ENCODE measurements at regions of chr9 and their contacts with region 1.

Region 1: DNA sequence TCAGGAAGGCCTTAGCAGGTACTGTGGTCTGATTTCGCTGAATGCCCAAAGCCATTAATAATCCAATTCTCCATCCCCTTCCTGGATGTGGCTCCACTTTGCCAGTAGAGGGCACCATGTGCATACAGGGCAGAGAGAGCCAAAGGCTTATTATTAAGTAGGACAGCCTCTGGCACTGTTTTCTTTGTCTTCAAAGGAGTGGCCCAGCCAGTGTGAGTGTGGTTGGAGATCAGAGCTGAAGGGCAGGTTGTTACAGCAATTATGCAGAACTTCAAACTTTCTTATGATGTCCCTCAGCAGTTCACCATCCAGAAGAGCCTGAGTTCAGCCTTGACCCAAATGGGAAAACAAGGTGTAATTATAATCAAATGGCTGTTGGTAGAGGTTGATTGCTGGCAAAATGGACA is 38.6 kb upstream of the CEMIP2 start:
- DNase-seq: peak; percentile 82
- ATAC-seq: peak; percentile 99
- H3K4me3 Mint-ChIP-seq: no peak overlapping the region
- H3K27ac Mint-ChIP-seq: peak overlapping the region; percentile 47
- H3K4me1 Mint-ChIP-seq: peaks cover 4% of the 10 kb centered on the region
- H3K27me3 Mint-ChIP-seq: no peaks in the 10 kb centered on the region

Region 2: DNA sequence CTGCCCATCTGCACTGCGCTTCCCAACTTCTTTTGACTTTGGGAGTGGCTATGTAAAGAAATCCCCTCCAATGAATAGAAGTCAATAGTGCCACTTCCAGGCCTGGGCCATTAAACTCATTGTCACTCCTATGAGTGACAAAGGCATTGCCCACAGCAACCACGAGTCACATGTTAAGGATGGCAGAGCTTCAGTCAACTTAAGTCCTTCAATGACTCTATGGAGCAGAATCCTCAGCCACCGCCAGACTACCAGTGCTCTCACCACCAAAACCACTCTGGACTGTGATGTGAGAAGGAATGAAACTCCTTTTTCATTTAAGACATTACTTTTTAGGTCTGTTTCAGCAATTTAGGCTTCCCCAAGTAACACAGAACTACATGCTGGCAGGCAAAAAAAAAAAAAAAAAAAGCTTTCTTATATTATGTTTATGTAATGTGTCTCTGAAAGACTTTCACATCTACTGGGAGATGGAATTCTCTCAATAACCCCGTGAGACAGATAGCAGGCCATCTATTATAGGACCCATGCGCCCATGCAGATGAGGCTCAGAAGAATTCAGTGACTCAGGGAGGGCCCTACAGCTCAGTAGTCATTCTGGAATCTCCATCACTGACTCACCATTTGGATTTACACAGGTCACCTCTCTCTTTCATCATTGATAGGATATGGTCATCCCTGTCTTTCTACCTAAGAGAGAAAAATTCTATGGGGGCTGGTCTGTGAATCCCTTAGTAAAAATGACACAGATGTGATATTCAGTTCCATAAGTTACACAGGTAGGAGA is 219.1 kb before region 1 on chr9:
- CTCF ChIA-PET with region 1: no interaction called
- DNase-seq: peak; percentile 41
- ATAC-seq: no peak
- H3K4me3 Mint-ChIP-seq: no peak overlapping the region
- H3K27ac Mint-ChIP-seq: no peak overlapping the region
- H3K4me1 Mint-ChIP-seq: no peaks in the 10 kb centered on the region
- H3K27me3 Mint-ChIP-seq: peaks cover 4% of the 10 kb centered on the region

Region 3: GRCh38 chr9:71783120-71783530 is 23.8 kb before region 1 on chr9:
- CTCF ChIA-PET with region 1: interaction called, 44 read pairs
- DNase-seq: peak; percentile 94
- ATAC-seq: peak; percentile 93
- H3K4me3 Mint-ChIP-seq: peak overlapping the region; percentile 60
- H3K27ac Mint-ChIP-seq: peak overlapping the region; percentile 99
- H3K4me1 Mint-ChIP-seq: peaks cover 47% of the 10 kb centered on the region
- H3K27me3 Mint-ChIP-seq: no peaks in the 10 kb centered on the region

Region 4: DNA sequence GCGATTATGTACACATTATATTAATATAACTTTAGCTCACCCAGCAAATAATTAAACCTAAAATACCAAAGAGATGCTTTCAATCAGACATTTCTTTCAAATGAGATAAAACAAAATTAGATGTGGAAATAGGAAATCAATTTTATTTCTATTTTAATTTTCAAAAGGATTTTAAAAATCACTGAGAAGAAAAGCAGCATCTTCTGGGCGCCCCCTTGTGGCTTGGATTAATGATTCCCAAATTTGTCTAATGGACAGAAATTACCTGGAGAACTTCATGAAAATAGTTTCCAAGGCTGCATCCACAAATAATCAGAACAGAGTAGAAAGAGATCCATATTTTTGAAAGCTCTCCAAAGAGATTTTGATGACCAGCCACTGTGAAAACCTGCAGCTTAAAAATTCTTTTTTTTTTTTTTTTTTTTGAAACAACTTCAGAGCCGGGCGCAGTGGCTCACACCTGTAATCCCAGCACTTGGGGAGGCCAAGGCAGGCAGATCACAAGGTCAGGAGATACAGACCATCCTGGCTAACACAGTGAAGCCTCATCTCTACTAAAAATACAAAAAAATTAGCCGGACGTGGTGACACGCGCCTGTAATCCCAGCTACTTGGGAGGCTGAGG is 12.3 kb after region 1 on chr9:
- CTCF ChIA-PET with region 1: interaction called, 45 read pairs
- DNase-seq: no peak
- ATAC-seq: no peak
- H3K4me3 Mint-ChIP-seq: no peak overlapping the region
- H3K27ac Mint-ChIP-seq: no peak overlapping the region
- H3K4me1 Mint-ChIP-seq: peaks cover 9% of the 10 kb centered on the region
- H3K27me3 Mint-ChIP-seq: no peaks in the 10 kb centered on the region

Region 5: DNA sequence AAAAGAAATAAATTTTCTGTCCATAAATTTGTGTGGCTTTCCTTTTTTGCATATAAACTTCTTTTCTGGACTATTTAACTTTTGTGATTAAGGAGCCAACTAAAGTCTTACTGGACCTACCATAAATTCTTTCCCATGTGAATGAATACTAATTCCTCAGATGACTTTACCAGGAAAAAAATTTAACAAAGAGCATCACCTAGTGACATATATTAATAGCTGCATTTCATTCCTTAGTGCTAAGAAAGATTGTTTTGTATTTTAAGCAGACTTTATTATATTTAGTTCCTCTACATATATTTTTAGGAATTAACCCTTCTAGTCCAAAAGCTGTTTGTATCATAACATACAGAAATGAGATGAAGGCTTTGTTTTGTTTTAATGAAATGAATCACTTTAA is 168.9 kb after region 1 on chr9:
- CTCF ChIA-PET with region 1: interaction called, 12 read pairs
- DNase-seq: no peak
- ATAC-seq: no peak
- H3K4me3 Mint-ChIP-seq: no peak overlapping the region
- H3K27ac Mint-ChIP-seq: no peak overlapping the region
- H3K4me1 Mint-ChIP-seq: no peaks in the 10 kb centered on the region
- H3K27me3 Mint-ChIP-seq: no peaks in the 10 kb centered on the region

Region 6: GRCh38 chr9:72038890-72039410 is 232.0 kb after region 1 on chr9:
- CTCF ChIA-PET with region 1: interaction called, 16 read pairs
- DNase-seq: peak; percentile 69
- ATAC-seq: peak; percentile 83
- H3K4me3 Mint-ChIP-seq: no peak overlapping the region
- H3K27ac Mint-ChIP-seq: no peak overlapping the region
- H3K4me1 Mint-ChIP-seq: peaks cover 4% of the 10 kb centered on the region
- H3K27me3 Mint-ChIP-seq: peaks cover 20% of the 10 kb centered on the region

Measured in activated CD8-positive, alpha-beta memory T cell treated with anti-CD3 and anti-CD28 coated beads, Interleukin-2, amount 10 ng/mL, durations not matched to agents 7 days and 5 days (primary cell).